ENCODE measurements at regions of chr11 and their contacts with region 1.

Region 1: GRCh38 chr11:5624489-5625279 is at the start of gene TRIM34:
- DNase-seq: peak; percentile 83
- H3K4me3 Mint-ChIP-seq: peak within 1 kb of the TSS; percentile 81
- H3K27ac Mint-ChIP-seq: peak within 1 kb of the TSS; percentile 57
- H3K4me1 Mint-ChIP-seq: peaks cover 31% of the 10 kb centered on the region
- H3K27me3 Mint-ChIP-seq: no peaks in the 10 kb centered on the region
- CTCF ChIP-seq: no peak
- total RNA-seq, gene TRIM34: 0.96 and 2.1 TPM in 2 replicates

Region 2: DNA sequence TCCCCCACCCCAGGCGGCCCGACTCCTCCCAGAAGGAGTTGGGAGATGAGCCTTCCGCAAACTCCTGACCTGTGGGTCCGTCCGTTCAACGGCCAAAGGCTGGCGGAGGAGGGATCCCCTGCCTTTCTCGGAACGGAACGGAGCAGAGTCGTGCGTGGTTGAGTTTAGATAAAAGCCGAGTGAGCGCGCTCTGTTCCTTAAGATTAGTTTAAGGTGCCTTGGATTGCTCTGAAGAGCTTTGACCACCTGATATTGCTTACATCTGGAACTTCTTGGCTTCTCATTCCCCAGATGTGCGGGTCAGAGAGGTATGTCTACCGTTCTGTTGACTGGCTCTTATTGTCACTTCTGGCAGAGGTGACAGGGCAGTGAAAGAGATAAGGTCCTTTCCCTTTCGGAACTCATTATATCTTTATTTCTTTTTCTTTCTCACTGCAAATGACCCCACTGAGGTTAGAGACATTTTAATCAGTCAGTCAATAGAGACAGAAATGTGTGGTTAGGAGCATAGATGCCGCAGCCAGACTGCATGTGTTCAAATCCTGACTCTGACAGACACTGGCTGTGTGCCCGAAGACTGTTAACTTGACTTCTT is 28.0 kb before region 1 on chr11 and contains the start of gene TRIM6:
- CTCF ChIA-PET with region 1: interaction called, 5 read pairs
- POLR2A ChIA-PET with region 1: interaction called, 11 read pairs
- intact Hi-C with region 1: no loop called
- DNase-seq: peak; percentile 47
- H3K4me3 Mint-ChIP-seq: peak within 1 kb of the TSS; percentile 76
- H3K27ac Mint-ChIP-seq: no peak within 1 kb of the TSS
- H3K4me1 Mint-ChIP-seq: peaks cover 11% of the 10 kb centered on the region
- H3K27me3 Mint-ChIP-seq: no peaks in the 10 kb centered on the region
- CTCF ChIP-seq: no peak
- total RNA-seq, gene TRIM6: 0.74 and 0.75 TPM in 2 replicates

Region 3: GRCh38 chr11:5605849-5606248 is 18.8 kb before region 1 on chr11:
- CTCF ChIA-PET with region 1: interaction called, 16 read pairs
- POLR2A ChIA-PET with region 1: interaction called, 6 read pairs
- intact Hi-C with region 1: no loop called
- DNase-seq: peak; percentile 87
- H3K4me3 Mint-ChIP-seq: no peak overlapping the region
- H3K27ac Mint-ChIP-seq: no peak overlapping the region
- H3K4me1 Mint-ChIP-seq: peaks cover 16% of the 10 kb centered on the region
- H3K27me3 Mint-ChIP-seq: no peaks in the 10 kb centered on the region
- CTCF ChIP-seq: peak; percentile 16

Region 4: DNA sequence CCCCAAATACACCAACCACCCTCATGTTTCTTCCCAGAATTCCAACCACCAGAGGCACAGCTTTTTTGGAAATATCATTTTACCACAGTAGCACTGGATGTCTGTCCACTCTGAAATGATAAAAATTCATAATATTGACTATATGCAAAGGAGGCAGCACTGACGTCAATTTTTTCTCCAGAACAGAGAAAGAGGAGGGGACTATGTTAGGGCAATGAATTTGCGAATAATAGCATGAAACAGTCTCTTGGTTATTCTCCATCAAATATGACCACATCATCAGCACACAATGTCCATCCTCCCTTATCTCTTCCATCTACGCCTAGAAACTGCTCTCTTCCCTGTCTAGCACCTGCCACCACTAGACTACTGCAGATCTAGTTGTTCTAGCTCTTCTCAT is 21.5 kb after region 1 on chr11:
- CTCF ChIA-PET with region 1: no interaction called
- POLR2A ChIA-PET with region 1: no interaction called
- intact Hi-C with region 1: no loop called
- DNase-seq: no peak
- H3K4me3 Mint-ChIP-seq: no peak overlapping the region
- H3K27ac Mint-ChIP-seq: no peak overlapping the region
- H3K4me1 Mint-ChIP-seq: no peaks in the 10 kb centered on the region
- H3K27me3 Mint-ChIP-seq: no peaks in the 10 kb centered on the region
- CTCF ChIP-seq: no peak